ENCODE measurements at regions of chr5 and their contacts with region 1.

Region 1: GRCh38 chr5:99032234-99033013 is 103.6 kb upstream of the CHD1 start:
- DNase-seq: peak; percentile 91
- ATAC-seq: peak; percentile 84
- H3K4me3 ChIP-seq: peak overlapping the region; percentile 67
- H3K27ac ChIP-seq: peak overlapping the region; percentile 25; the same call in 1 of the 2 replicates
- H3K4me1 ChIP-seq: peaks cover 29% of the 10 kb centered on the region
- H3K27me3 ChIP-seq: no peaks in the 10 kb centered on the region
- CTCF ChIP-seq: peak; percentile 98

Region 2: DNA sequence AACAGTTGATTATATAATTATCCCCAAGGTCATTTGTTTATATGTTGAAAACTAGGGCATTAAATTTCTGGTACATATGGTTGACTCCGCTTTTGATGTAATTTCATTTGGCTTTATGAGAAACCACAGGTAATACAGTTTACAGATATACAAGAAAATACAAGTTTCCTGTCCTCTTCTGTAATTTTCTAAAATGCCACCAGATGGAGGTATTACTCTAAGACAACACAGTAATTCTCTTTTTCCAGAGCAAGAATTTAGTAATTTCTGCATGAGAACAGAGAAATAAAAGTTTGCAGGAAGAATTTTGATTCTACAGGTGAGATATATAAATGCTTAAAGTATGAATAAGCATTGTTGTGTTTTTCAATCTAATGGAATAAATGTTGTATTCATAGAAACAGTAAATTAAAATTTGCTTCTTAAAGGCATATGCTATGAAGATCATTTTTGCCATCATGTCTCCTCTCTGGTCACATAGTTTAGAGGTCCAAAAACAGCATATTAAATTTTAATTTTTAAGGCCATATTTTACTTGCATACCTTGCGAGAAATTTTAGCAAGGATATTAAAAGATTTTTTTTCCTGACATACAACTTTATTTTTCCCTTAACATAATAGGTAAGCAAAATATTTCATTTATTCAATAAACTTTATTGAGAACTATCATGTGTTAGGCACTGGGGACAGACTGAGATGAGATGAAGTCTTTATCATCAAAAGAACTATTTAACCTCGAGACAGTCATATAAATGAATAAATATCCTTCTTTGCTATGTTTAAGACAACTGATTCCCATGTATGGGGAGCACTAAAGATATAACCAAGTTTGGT is 126.3 kb before region 1 on chr5:
- CTCF ChIA-PET with region 1: interaction called, 7 read pairs
- POLR2A ChIA-PET with region 1: interaction called, 4 read pairs
- intact Hi-C with region 1: loop called (anchors 1 kb)
- DNase-seq: peak; percentile 83
- ATAC-seq: peak; percentile 14; the same call in 1 of the 2 replicates
- H3K4me3 ChIP-seq: no peak overlapping the region
- H3K27ac ChIP-seq: peak overlapping the region; percentile 81
- H3K4me1 ChIP-seq: peaks cover 52% of the 10 kb centered on the region
- H3K27me3 ChIP-seq: no peaks in the 10 kb centered on the region
- CTCF ChIP-seq: peak; percentile 92

Region 3: DNA sequence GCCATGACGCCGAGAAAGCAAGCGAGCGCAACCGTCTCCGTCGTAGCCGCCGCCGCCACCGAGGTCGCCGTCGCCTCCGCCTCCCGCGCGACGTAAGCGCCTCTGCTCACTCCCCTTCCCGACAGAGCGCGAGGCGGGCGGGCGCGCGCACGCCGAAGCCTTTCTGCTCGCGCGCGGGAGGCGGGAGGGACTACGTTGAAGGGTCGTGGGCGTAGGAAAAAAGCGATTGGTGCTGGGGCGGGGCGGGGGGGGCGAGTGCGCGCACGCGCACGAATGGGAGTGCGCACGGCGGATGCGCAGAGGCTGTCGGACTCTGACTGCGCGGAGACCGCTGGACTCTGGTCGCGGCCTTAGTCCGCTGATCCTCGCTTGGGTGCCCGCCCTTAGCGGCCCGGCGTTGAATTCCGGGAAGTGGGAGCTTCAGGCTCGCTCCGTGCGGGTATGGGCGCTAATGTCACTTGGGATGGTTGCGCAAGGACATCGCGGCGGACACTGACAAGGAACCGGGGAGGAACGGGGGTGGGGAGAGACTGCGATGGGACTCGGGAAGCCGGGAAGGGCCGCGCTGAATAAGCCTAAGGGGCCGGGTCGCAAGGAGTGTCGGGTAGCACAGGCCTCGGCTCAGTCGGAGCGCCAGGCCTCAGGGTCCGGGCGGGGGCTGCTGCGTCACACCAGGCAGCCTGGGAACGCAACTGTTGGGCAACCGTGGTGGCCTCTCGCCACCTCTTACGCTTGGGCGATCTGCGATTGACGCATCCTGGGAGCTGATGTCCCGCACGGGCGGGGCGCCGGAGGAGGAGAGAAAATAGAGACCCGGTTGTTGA is 103.3 kb before region 1 on chr5 and contains the start of gene CHD1:
- CTCF ChIA-PET with region 1: interaction called, 4 read pairs
- POLR2A ChIA-PET with region 1: no interaction called
- intact Hi-C with region 1: loop called (anchors 1 kb)
- DNase-seq: peak; percentile 99
- ATAC-seq: peak; percentile 67
- H3K4me3 ChIP-seq: peak within 1 kb of the TSS; percentile 98
- H3K27ac ChIP-seq: peak within 1 kb of the TSS; percentile 99
- H3K4me1 ChIP-seq: peaks cover 21% of the 10 kb centered on the region
- H3K27me3 ChIP-seq: no peaks in the 10 kb centered on the region
- CTCF ChIP-seq: no peak
- total RNA-seq, gene CHD1: 45.9 and 52.3 TPM in 2 replicates

Region 4: DNA sequence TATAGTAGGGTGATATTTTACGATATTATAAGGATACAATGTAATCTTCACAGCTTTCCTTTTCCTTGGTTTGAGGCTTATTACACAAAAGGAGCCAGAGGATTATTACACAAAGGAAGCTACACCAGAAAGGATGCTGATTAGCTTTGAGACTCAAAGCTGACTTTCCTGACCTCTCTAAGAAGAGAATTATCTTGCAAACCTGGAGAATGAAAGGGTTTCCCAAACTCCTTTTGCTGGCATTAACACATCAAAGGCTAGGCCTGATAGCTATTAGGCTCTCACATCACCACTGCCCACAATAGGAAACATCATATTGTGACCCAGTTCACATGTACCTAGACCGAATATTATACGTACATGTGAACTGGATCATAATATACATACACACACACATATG is 69.4 kb before region 1 on chr5:
- CTCF ChIA-PET with region 1: no interaction called
- POLR2A ChIA-PET with region 1: no interaction called
- intact Hi-C with region 1: loop called (anchors 1 kb)
- DNase-seq: no peak
- ATAC-seq: no peak
- H3K4me3 ChIP-seq: no peak overlapping the region
- H3K27ac ChIP-seq: no peak overlapping the region
- H3K4me1 ChIP-seq: no peaks in the 10 kb centered on the region
- H3K27me3 ChIP-seq: no peaks in the 10 kb centered on the region
- CTCF ChIP-seq: no peak

Region 5: GRCh38 chr5:99004960-99005359 is 27.5 kb before region 1 on chr5:
- CTCF ChIA-PET with region 1: no interaction called
- POLR2A ChIA-PET with region 1: no interaction called
- intact Hi-C with region 1: no loop called
- DNase-seq: no peak
- ATAC-seq: no peak
- H3K4me3 ChIP-seq: no peak overlapping the region
- H3K27ac ChIP-seq: no peak overlapping the region
- H3K4me1 ChIP-seq: no peaks in the 10 kb centered on the region
- H3K27me3 ChIP-seq: no peaks in the 10 kb centered on the region
- CTCF ChIP-seq: no peak

Region 6: DNA sequence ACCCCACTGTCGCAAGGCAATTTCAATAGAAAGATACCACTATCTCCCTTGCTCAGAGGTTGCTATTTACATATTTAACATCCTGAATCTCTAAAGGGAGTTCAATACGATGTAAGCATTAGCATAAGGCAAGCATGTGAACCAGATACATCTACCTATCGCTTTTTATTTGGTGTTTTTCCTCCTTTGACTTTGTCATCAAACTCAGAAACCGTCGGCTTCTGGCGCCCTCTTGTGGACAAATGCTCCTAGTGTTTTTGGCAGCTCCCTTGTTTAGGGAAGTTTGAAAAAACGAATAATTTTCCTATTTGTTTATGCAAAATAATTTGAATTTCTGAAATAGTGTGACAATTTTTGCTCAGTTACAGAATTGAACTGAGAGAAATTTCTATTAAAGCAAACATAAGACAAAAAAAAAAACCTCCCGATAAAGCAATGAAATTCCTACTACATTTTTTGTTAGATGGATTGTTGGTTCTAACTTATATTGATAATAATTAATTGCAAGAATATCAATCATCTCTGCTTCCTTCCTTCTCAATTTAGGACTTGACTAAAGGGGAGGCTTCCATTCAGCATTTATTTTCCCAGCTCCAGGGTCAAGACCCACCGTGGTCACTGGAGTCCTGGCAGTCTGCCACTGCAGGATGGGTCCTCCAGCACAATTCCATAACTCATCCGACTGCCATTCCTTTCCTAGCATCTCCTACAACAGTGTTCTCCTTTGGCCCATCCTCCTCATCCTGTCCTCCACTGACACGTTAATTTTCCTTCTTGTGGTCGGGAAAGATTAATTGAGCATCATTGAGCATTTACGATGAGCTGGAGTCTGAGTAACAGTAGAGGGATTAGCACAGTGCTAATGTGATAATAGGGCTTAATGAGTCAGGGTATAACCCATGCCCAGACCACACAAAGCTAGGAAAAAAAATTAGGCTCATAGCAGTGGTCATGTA is 28.2 kb after region 1 on chr5:
- CTCF ChIA-PET with region 1: no interaction called
- POLR2A ChIA-PET with region 1: no interaction called
- intact Hi-C with region 1: loop called (anchors 1 kb)
- DNase-seq: peak; percentile 94
- ATAC-seq: peak; percentile 50
- H3K4me3 ChIP-seq: no peak overlapping the region
- H3K27ac ChIP-seq: no peak overlapping the region
- H3K4me1 ChIP-seq: peaks cover 20% of the 10 kb centered on the region
- H3K27me3 ChIP-seq: no peaks in the 10 kb centered on the region
- CTCF ChIP-seq: peak; percentile 99

Region 7: DNA sequence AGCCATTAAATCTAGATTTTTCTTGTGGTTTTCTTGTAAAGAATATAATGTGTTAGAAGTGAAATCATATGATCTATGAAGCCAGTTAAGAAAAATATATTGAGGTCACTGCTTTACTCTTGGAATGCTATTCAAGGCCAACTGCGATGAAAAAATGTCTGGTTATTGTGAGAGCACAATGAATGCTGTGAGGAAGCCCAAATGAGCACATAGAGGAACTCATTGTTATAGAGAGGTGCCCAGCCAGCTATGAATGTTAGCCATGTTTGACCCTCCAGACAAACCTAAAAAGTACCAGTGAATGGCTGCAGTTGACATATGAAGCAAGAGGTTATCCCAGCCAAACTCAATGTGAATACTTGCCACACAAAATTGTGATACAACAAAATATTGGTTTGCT is 1142.9 kb after region 1 on chr5:
- CTCF ChIA-PET with region 1: no interaction called
- POLR2A ChIA-PET with region 1: no interaction called
- intact Hi-C with region 1: no loop called
- DNase-seq: no peak
- ATAC-seq: no peak
- H3K4me3 ChIP-seq: no peak overlapping the region
- H3K27ac ChIP-seq: no peak overlapping the region
- H3K4me1 ChIP-seq: no peaks in the 10 kb centered on the region
- H3K27me3 ChIP-seq: no peaks in the 10 kb centered on the region
- CTCF ChIP-seq: no peak